Activated T-helper 1 cell treated with anti-CD3 and anti-CD28 coated beads, Interleukin-12 subunit alpha, Interleukin-12 subunit beta, Interleukin-2, Interleukin-4 antibody, amounts not matched to agents 30 ng/mL and 10 ng/mL and 1 ng/mL, durations not matched to agents 14 hours and 24 hours and 36 hours (primary cell): ENCODE measurements at regions of chr19 and their contacts with region 1.

Region 1: DNA sequence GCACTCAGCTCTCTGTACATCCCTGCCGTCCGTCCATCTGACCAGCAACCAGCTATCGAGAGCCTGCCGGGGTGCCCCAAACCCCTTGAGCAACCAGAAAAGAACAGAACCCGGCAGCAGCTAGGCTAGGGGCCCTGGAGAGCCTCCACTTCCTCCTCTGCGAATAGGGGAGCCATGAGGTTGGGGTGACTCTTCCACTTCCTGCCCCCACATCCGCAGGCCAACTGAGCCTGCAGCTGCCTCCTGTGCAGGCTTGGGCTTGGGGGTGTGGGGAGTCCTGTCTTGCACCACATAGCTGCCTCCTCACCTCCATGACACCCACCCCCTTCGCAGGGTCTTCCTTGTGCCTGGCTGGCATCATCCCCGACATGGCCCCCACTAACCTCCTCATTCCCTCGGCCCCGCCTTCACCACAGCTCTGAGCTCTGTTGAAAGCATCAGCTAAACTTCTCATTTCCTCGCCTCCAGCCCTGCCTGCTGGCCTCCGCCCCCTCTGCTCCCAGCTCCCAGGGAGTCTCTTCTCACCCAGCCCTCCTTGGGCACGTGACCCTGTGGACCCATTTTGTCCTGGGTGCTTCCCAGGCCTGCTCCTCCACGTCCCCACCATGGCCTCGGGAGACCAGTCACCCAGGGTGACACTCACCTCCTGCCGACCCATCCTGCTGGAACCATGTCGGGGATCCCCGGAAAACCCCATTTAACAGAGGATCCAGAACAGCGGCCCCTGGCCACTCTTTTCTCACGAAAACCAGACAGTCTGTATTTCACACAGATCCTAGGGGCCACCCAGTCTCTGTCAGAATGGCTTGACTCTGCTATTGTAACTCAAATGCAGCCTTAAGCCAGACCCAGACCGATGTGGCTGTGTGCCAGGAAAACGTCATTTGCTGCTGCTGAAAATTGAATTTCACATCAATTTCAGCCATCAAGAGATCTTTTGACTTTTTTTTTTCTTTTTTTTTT is 50.4 kb downstream of the MYO9B start:
- DNase-seq: peak; percentile 77
- H3K4me3 Mint-ChIP-seq: peak overlapping the region; percentile 82
- H3K27ac Mint-ChIP-seq: peak overlapping the region; percentile 97
- H3K4me1 Mint-ChIP-seq: peaks cover 59% of the 10 kb centered on the region
- H3K27me3 Mint-ChIP-seq: no peaks in the 10 kb centered on the region

Region 2: DNA sequence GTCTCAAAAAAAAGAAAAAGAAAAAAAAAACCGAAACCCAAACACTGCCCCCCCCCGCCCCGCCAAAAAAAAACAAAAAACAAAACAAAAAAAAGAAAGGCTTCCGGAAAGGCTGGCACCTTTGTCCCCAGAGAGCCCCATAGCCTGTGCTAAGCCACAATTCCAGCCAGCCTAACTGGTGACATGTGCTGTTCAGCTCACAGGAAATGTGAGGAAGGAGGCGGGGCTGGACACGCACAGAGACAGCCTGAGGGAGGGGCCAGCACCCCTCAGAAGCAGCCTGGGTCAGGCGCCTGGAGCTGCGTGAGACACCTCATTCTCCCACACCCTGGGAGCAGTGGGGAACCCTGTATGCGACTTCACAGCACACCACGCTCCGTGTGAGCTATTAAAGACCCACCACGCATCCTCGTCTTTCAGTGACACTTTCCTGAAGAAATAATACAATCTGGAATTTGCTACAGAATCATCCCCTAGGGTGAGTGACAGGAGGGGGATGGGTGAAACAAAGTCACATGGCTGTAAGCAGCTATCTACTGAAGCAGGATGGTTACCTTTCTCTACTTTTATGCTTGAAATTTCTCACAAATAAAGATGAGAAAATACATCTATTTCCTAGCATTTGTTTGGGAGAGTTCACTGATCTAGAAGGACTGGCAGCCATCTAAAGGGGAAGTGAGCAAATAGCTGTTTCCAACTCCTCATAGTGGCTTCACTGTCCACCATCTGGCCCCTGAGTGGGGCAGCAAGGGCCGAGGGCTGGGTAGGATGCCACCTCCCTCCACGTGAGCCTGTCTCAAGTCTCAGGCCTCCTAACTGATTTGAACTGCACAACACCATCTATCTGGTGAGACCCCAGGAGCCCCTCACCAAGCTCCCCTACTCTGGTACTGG is 541.5 kb before region 1 on chr19:
- intact Hi-C with region 1: loop called (anchors 5 kb)
- DNase-seq: peak; percentile 88
- H3K4me3 Mint-ChIP-seq: peak overlapping the region; percentile 87
- H3K27ac Mint-ChIP-seq: peak overlapping the region; percentile 90
- H3K4me1 Mint-ChIP-seq: peaks cover 73% of the 10 kb centered on the region
- H3K27me3 Mint-ChIP-seq: no peaks in the 10 kb centered on the region

Region 3: DNA sequence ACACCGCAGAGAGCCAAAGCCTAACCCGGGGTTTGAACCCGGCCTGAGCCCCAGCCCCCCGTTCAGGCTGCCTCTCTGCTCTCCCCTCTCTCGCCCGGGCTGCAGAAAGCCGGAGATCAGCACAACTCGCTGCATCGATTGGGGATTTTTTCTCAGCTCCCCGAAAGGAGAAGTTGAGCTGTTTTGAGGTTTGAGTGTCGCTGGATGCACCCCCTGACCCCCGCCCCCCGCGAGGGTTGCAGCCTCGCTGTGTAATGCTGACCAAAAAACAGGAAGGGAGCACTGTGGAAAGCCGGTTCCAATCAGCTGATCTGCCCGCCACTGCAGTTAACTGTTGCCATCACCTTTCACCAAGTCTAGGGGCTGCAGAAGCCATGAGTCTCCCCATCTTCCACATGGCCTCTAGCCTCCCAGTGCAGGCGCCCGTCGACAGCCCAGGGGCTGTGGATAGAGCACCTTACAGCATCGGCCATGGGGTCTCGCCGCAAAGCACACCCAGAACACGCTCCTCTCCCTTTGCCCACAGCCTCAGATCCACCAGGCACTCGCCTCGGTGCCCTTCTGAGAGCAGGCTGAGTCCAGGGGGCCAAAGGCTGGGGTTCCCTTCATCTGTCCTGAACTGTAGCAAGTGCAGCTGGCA is 15.9 kb before region 1 on chr19:
- intact Hi-C with region 1: loop called (anchors 2 kb)
- DNase-seq: peak; percentile 6
- H3K4me3 Mint-ChIP-seq: peak overlapping the region; percentile 15
- H3K27ac Mint-ChIP-seq: peak overlapping the region; percentile 27
- H3K4me1 Mint-ChIP-seq: peaks cover 18% of the 10 kb centered on the region
- H3K27me3 Mint-ChIP-seq: no peaks in the 10 kb centered on the region

Region 4: DNA sequence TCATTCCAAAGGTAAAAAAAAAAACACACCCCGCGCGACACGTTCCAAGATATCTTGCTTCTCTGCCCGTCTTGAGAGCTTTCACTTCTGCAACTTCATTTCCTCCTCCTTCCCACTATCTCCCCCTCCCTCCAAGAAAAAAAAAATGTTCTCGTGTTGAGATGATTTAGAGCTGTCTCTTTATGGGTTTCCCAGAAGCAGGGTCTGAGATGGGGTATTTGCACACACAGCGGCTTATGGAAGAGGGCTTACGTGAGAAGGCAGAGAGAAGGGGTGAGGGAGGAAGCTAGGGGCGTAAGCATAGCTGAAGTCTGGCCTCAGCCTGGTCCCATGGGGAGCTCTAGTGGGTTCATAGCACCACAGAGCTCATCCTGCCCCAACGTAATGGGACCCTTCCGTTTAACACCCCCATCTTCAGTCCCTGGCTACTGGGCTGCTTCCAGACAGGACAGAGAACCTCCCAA is 57.9 kb after region 1 on chr19:
- intact Hi-C with region 1: loop called (anchors 5 kb)
- DNase-seq: peak; percentile 19
- H3K4me3 Mint-ChIP-seq: peak overlapping the region; percentile 82
- H3K27ac Mint-ChIP-seq: peak overlapping the region; percentile 93
- H3K4me1 Mint-ChIP-seq: peaks cover 20% of the 10 kb centered on the region
- H3K27me3 Mint-ChIP-seq: no peaks in the 10 kb centered on the region